ENCODE measurements at regions of chr15 and their contacts with region 1.

Region 1: GRCh38 chr15:73697033-73697467 is 12.9 kb downstream of the CD276 start:
- DNase-seq: peak; percentile 80 to 94
- ATAC-seq: peak; percentile 91 to 97 (median 96)
- H3K4me3 ChIP-seq: peak overlapping the region in 1 of 10 donors; percentile 9
- H3K27ac ChIP-seq: peak overlapping the region in 5 of 10 donors; percentile 4 to 54 (median 48)
- H3K4me1 ChIP-seq: peaks cover 20 to 62% (median 50%) of the 10 kb centered on the region in 9 donors
- H3K27me3 ChIP-seq: peaks cover 0 to 20% (median 0%) of the 10 kb centered on the region in 7 donors
- CTCF ChIP-seq: no peak

Region 2: DNA sequence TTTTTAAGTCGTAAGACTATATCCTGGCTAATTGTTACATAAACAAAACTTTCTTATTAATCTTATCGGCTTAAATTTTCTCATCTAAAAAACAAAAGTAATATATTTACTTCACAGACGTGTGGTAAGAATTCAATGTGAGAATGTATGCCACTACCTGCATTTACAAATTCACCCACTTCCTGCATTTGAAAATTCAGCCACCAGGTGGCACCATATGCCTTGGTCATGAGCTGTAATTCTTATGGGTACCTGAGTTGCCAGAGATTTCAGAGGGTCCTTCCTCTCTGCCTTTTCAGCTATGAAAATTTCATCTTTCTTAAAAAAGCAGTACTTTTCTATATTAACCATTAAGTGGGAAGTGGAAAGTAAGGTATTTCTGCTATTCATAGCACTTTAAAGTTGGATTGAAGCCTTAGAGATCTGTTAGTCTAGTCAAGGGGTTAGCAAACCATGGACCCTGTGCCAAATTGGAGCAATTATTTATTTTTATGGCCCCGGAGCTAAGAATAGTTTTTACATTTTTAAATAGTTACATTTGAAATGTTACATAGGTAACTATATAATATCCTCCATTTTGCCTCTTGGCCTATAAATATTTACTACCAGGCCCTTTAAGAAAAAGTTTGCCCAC is 456.1 kb before region 1 on chr15:
- intact Hi-C with region 1: loop called in 1 of 10 experiments (anchors 5 kb)
- DNase-seq: peak in 1 of 2 donors; percentile 67
- ATAC-seq: peak in 2 of 8 donors; percentile 51 to 61
- H3K4me3 ChIP-seq: no peak overlapping the region
- H3K27ac ChIP-seq: no peak overlapping the region
- H3K4me1 ChIP-seq: peaks cover 0 to 12% (median 0%) of the 10 kb centered on the region in 9 donors
- H3K27me3 ChIP-seq: no peaks in the 10 kb centered on the region
- CTCF ChIP-seq: peak; percentile 70 to 94 (median 88)

Region 3: GRCh38 chr15:73305331-73306211 is 391.5 kb before region 1 on chr15:
- intact Hi-C with region 1: loop called in 3 of 10 experiments (anchors 10 kb)
- DNase-seq: peak in 1 of 2 donors; percentile 42
- ATAC-seq: peak; percentile 52 to 89 (median 83)
- H3K4me3 ChIP-seq: no peak overlapping the region
- H3K27ac ChIP-seq: no peak overlapping the region
- H3K4me1 ChIP-seq: peaks cover 0 to 17% (median 0%) of the 10 kb centered on the region in 9 donors
- H3K27me3 ChIP-seq: no peaks in the 10 kb centered on the region
- CTCF ChIP-seq: peak; percentile 29 to 69 (median 56)

Region 4: GRCh38 chr15:73560501-73561117 is 136.4 kb before region 1 on chr15:
- intact Hi-C with region 1: loop called (anchors 2 to 10 kb)
- DNase-seq: peak in 1 of 2 donors; percentile 36
- ATAC-seq: peak in 4 of 8 donors; percentile 46 to 54 (median 50)
- H3K4me3 ChIP-seq: no peak overlapping the region
- H3K27ac ChIP-seq: no peak overlapping the region
- H3K4me1 ChIP-seq: peaks cover 0 to 23% (median 11%) of the 10 kb centered on the region in 9 donors
- H3K27me3 ChIP-seq: no peaks in the 10 kb centered on the region
- CTCF ChIP-seq: peak; percentile 26 to 74 (median 55)

Region 5: GRCh38 chr15:73593304-73594074 is 103.6 kb before region 1 on chr15:
- intact Hi-C with region 1: no loop called
- DNase-seq: peak in 1 of 2 donors; percentile 71
- ATAC-seq: peak in 5 of 8 donors; percentile 29 to 60 (median 52)
- H3K4me3 ChIP-seq: no peak overlapping the region
- H3K27ac ChIP-seq: peak overlapping the region in 1 of 10 donors; percentile 8
- H3K4me1 ChIP-seq: peaks cover 13 to 67% (median 55%) of the 10 kb centered on the region in 9 donors
- H3K27me3 ChIP-seq: no peaks in the 10 kb centered on the region
- CTCF ChIP-seq: no peak

Region 6: GRCh38 chr15:73633111-73633990 is 63.7 kb before region 1 on chr15 and contains the start of gene NPTN:
- intact Hi-C with region 1: loop called (anchors 2 to 10 kb)
- DNase-seq: peak; percentile 98 to 99
- ATAC-seq: peak; percentile 93 to 98 (median 96)
- H3K4me3 ChIP-seq: peak within 1 kb of the TSS; percentile 88 to 98 (median 96)
- H3K27ac ChIP-seq: peak within 1 kb of the TSS; percentile 94 to 99 (median 98)
- H3K4me1 ChIP-seq: peaks cover 4 to 63% (median 50%) of the 10 kb centered on the region in 9 donors
- H3K27me3 ChIP-seq: peaks cover 0 to 8% (median 0%) of the 10 kb centered on the region in 7 donors
- CTCF ChIP-seq: peak in 5 of 9 donors; percentile 6 to 27 (median 14)
- total RNA-seq, gene NPTN: 167 to 212 (median 188) TPM

Region 7: GRCh38 chr15:73677146-73677607 is 19.9 kb before region 1 on chr15:
- intact Hi-C with region 1: loop called in 7 of 10 experiments (anchors 1 to 2 kb)
- DNase-seq: peak in 1 of 2 donors; percentile 65
- ATAC-seq: peak; percentile 63 to 87 (median 84)
- H3K4me3 ChIP-seq: no peak overlapping the region
- H3K27ac ChIP-seq: no peak overlapping the region
- H3K4me1 ChIP-seq: peaks cover 0 to 13% (median 0%) of the 10 kb centered on the region in 9 donors
- H3K27me3 ChIP-seq: peaks cover 0 to 23% (median 2%) of the 10 kb centered on the region in 7 donors
- CTCF ChIP-seq: peak; percentile 73 to 85 (median 84)

Region 8: DNA sequence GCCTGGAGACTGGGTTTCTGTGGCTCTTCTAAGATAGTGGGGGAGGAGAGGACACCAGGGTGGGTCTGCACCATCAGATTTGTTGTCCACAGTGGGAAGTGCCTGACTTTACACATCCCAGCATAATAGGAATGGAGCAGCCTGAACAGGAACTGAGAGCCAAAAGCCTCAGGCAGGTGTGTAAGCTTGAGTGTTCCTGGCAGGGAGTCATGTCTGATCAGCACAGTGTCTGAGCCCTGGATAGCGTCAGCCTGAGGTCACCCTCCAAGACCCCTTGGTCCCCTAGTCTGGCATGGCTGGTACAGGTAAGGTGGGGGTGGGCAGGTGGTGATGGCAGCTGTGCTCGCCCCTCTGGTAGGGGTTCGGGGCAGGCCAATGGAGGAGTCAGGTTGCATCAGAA is 35.9 kb after region 1 on chr15:
- intact Hi-C with region 1: no loop called
- DNase-seq: no peak
- ATAC-seq: no peak
- H3K4me3 ChIP-seq: no peak overlapping the region
- H3K27ac ChIP-seq: no peak overlapping the region
- H3K4me1 ChIP-seq: peaks cover 0 to 4% (median 0%) of the 10 kb centered on the region in 9 donors
- H3K27me3 ChIP-seq: peaks cover 0 to 4% (median 0%) of the 10 kb centered on the region in 7 donors
- CTCF ChIP-seq: no peak